ENCODE measurements at regions of chr3 and their contacts with region 1.

Region 1: GRCh38 chr3:48739955-48740823 is 23.2 kb upstream of the IP6K2 start:
- DNase-seq: peak; percentile 75
- H3K4me3 Mint-ChIP-seq: no peak overlapping the region
- H3K27ac Mint-ChIP-seq: no peak overlapping the region
- H3K4me1 Mint-ChIP-seq: peaks cover 5% of the 10 kb centered on the region
- H3K27me3 Mint-ChIP-seq: no peaks in the 10 kb centered on the region
- CTCF ChIP-seq: peak; percentile 81

Region 2: DNA sequence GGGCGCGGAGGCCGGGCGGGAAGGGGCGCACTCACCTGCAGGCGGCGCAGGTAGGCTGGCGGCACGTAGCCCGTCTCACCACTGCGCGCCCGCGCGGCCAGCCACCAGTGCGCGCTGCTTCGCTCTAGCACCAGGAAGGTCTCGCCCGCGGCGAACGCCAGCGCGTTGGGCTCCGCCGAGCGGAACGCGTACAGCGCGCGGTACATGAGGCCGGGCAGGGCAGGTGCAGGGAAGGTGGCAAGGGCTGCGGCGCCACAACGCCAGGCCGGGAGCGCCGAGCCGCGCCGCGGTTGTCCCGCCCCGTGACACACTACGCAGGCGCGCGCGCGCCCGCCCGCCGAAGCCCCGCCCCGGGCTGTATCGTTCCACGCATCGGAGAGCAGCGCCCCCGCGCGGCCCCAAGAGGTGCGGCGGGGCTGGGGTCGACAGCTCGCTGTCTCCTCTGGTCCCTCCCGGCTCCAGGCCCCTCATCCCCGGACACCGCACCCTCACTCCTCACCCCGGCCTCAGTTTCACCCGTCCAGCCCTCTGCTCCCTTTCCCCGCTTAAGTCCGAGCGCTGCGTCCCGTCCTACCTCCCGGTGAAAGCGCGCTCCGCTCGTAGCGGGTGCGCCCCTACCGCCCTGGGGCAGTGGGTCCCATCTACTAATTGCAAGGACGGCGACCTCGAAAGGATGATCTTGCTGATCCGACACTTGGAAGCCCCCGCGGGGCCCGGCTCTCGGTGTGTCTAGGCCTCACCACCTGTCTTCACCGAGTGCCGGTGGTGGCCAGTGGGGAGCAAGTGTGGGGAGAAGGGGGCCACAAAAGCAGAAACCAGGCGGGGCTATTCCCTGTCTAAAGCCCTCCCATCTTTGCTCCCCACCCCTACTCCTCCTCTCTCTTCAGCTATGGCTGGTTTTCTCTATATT is 54.3 kb before region 1 on chr3 and contains the start of gene NCKIPSD:
- CTCF ChIA-PET with region 1: interaction called, 18 read pairs
- POLR2A ChIA-PET with region 1: interaction called, 7 read pairs
- intact Hi-C with region 1: no loop called
- DNase-seq: peak; percentile 85
- H3K4me3 Mint-ChIP-seq: peak within 1 kb of the TSS; percentile 73
- H3K27ac Mint-ChIP-seq: peak within 1 kb of the TSS; percentile 85
- H3K4me1 Mint-ChIP-seq: peaks cover 31% of the 10 kb centered on the region
- H3K27me3 Mint-ChIP-seq: no peaks in the 10 kb centered on the region
- CTCF ChIP-seq: peak; percentile 63
- total RNA-seq, gene NCKIPSD: 23.8 and 26.9 TPM in 2 replicates

Region 3: DNA sequence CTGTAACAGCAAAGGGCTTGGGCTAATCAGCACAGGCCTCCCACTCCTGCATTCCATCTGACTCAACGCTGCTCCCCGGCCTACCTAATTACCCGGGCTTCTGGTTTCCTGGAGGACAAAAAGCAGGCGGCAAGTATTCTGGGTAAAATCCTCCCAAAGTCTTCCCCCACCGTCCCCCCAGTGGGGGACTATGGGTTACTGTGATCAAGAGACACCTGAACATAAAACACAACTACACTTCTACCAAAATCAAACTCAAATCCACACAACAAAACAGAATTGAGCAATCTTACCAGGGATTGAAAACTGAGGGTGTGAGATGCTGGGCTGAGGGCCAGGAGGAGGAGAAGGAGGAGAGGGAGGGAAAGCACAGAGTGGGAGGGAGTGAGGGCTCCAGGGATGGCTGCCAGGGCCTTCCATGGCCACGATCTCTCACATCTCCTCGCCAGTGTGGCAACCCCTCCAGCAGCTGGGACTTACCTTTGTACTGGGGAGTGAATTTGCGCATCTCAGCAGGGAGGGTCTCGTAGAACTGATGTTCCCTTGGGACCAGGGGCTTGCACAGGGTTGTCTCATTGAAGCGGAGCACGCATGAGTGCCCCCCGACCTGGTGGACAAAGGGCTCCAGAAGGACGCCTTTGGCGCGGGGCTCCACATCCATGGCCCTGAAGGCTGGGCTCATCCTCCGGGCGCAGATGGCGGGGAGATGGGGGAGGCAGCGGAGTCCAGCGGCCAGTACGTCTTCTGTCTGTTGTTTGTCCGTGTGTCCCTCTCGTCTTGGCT is 45.4 kb before region 1 on chr3:
- CTCF ChIA-PET with region 1: interaction called, 8 read pairs
- POLR2A ChIA-PET with region 1: interaction called, 9 read pairs
- intact Hi-C with region 1: loop called (anchors 2 kb)
- DNase-seq: peak; percentile 97
- H3K4me3 Mint-ChIP-seq: peak overlapping the region; percentile 85
- H3K27ac Mint-ChIP-seq: peak overlapping the region; percentile 89
- H3K4me1 Mint-ChIP-seq: peaks cover 27% of the 10 kb centered on the region
- H3K27me3 Mint-ChIP-seq: no peaks in the 10 kb centered on the region
- CTCF ChIP-seq: no peak

Region 4: DNA sequence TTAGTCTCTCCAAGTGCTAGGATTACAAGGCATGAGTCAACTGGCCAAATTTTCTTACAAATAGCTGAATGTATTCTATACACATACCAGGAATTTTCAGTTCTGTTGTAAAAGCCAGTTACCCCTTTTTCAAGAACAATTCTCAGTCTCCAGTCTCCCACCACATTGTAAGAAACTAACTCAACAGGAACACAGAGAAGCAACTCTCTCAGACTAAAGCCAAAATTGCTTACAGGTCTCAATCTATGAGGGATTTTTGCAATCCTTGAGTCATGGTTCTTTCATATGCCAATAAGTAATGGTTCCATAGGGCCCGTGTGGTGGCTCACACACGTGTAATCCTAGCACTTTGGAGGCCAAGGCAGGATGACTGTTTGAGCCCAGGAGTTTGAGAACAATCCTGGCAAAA is 31.7 kb before region 1 on chr3:
- CTCF ChIA-PET with region 1: interaction called, 10 read pairs
- POLR2A ChIA-PET with region 1: interaction called, 7 read pairs
- intact Hi-C with region 1: no loop called
- DNase-seq: peak; percentile 72
- H3K4me3 Mint-ChIP-seq: peak overlapping the region; percentile 53
- H3K27ac Mint-ChIP-seq: peak overlapping the region; percentile 96
- H3K4me1 Mint-ChIP-seq: peaks cover 21% of the 10 kb centered on the region
- H3K27me3 Mint-ChIP-seq: no peaks in the 10 kb centered on the region
- CTCF ChIP-seq: no peak

Region 5: GRCh38 chr3:48716982-48717746 is 23.0 kb before region 1 on chr3 and contains the start of gene IP6K2:
- CTCF ChIA-PET with region 1: interaction called, 16 read pairs
- POLR2A ChIA-PET with region 1: interaction called, 25 read pairs
- intact Hi-C with region 1: no loop called
- DNase-seq: peak; percentile 98
- H3K4me3 Mint-ChIP-seq: peak within 1 kb of the TSS; percentile 93
- H3K27ac Mint-ChIP-seq: peak within 1 kb of the TSS; percentile 98
- H3K4me1 Mint-ChIP-seq: peaks cover 12% of the 10 kb centered on the region
- H3K27me3 Mint-ChIP-seq: no peaks in the 10 kb centered on the region
- CTCF ChIP-seq: no peak
- total RNA-seq, gene IP6K2: 99.3 and 117 TPM in 2 replicates

Region 6: GRCh38 chr3:48727511-48727910 is 12.7 kb before region 1 on chr3:
- CTCF ChIA-PET with region 1: interaction called, 25 read pairs
- POLR2A ChIA-PET with region 1: interaction called, 3 read pairs
- intact Hi-C with region 1: no loop called
- DNase-seq: no peak
- H3K4me3 Mint-ChIP-seq: no peak overlapping the region
- H3K27ac Mint-ChIP-seq: no peak overlapping the region
- H3K4me1 Mint-ChIP-seq: no peaks in the 10 kb centered on the region
- H3K27me3 Mint-ChIP-seq: no peaks in the 10 kb centered on the region
- CTCF ChIP-seq: no peak

Region 7: GRCh38 chr3:48759071-48759470 is 18.9 kb after region 1 on chr3:
- CTCF ChIA-PET with region 1: interaction called, 19 read pairs
- POLR2A ChIA-PET with region 1: no interaction called
- intact Hi-C with region 1: no loop called
- DNase-seq: no peak
- H3K4me3 Mint-ChIP-seq: no peak overlapping the region
- H3K27ac Mint-ChIP-seq: no peak overlapping the region
- H3K4me1 Mint-ChIP-seq: no peaks in the 10 kb centered on the region
- H3K27me3 Mint-ChIP-seq: no peaks in the 10 kb centered on the region
- CTCF ChIP-seq: no peak

Measured in MCF 10A (cell line).